CD14-positive monocyte (primary cell): ENCODE measurements at regions of chr13 and their contacts with region 1.

Region 1: GRCh38 chr13:44259045-44260027 is 114.3 kb upstream of the SERP2 start:
- DNase-seq: peak; percentile 93 to 98 (median 95)
- H3K4me3 ChIP-seq: peak overlapping the region; percentile 27 to 56 (median 40)
- H3K4me3 Mint-ChIP-seq: peak overlapping the region; percentile 63 to 92
- H3K27ac ChIP-seq: peak overlapping the region; percentile 53 to 87
- H3K27ac Mint-ChIP-seq: peak overlapping the region; percentile 93 to 99 (median 97)
- H3K4me1 ChIP-seq: peaks cover 18 to 20% of the 10 kb centered on the region in 2 donors
- H3K4me1 Mint-ChIP-seq: peaks cover 20% of the 10 kb centered on the region
- H3K27me3 ChIP-seq: no peaks in the 10 kb centered on the region
- H3K27me3 Mint-ChIP-seq: peaks cover 3 to 9% (median 3%) of the 10 kb centered on the region in 3 donors
- CTCF ChIP-seq: no peak

Region 2: GRCh38 chr13:44141725-44142539 is 117.4 kb before region 1 on chr13:
- intact Hi-C with region 1: loop called in 1 of 2 experiments (anchors 5 kb)
- DNase-seq: peak; percentile 95 to 97 (median 96)
- H3K4me3 ChIP-seq: peak overlapping the region; percentile 62 to 97 (median 75)
- H3K4me3 Mint-ChIP-seq: peak overlapping the region; percentile 86 to 97
- H3K27ac ChIP-seq: peak overlapping the region; percentile 90
- H3K27ac Mint-ChIP-seq: peak overlapping the region; percentile 88 to 98 (median 96)
- H3K4me1 ChIP-seq: peaks cover 13 to 16% of the 10 kb centered on the region in 2 donors
- H3K4me1 Mint-ChIP-seq: peaks cover 21% of the 10 kb centered on the region
- H3K27me3 ChIP-seq: no peaks in the 10 kb centered on the region
- H3K27me3 Mint-ChIP-seq: peaks cover 1 to 4% (median 2%) of the 10 kb centered on the region in 3 donors
- CTCF ChIP-seq: no peak

Region 3: DNA sequence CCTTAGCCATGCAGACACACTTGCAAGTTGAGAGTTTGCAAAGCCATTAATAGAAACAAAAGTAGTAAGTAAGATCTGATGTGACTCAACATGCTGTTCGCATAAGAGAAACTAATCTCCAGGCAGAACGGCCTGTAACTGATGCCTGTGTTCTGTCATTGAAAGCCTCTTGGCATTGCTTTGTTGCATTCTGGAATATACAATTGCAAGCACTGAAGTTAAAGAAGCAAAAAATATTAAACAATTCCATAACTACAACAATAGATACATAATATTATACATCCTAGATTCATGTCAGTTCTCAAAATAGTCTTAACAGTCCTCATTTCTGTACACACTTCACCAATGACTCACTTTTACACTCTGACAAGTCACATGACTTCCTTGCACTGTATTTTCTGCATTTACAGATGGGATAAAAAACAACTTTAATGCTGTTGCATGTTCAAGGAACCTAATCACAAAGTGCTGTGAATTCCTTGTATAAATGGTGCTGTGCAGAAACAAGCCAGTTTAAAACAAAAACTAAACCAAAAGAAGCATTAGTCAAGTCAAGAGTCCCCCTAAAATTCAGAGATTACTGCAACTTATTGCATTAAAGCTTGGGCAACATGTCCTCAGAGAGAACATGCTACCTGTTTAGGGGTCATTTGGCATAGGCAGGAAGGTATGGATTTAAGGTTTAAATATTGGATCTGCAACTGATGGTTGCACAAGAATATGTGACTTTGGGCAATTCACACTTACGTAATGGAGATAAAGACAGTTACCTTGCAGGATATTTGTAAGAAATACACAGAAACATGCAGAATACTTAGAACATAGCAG is 34.8 kb after region 1 on chr13:
- intact Hi-C with region 1: loop called (anchors 2 to 5 kb)
- DNase-seq: peak in 1 of 3 donors; percentile 47
- H3K4me3 ChIP-seq: peak overlapping the region in 1 of 3 experiments; percentile 3
- H3K4me3 Mint-ChIP-seq: peak overlapping the region in 1 of 2 donors; percentile 68
- H3K27ac ChIP-seq: peak overlapping the region in 1 of 2 donors; percentile 80
- H3K27ac Mint-ChIP-seq: peak overlapping the region; percentile 79 to 91 (median 89)
- H3K4me1 ChIP-seq: peaks cover 20 to 30% of the 10 kb centered on the region in 2 donors
- H3K4me1 Mint-ChIP-seq: peaks cover 34% of the 10 kb centered on the region
- H3K27me3 ChIP-seq: no peaks in the 10 kb centered on the region
- H3K27me3 Mint-ChIP-seq: peaks cover 0 to 2% (median 0%) of the 10 kb centered on the region in 3 donors
- CTCF ChIP-seq: no peak